ENCODE measurements at regions of chr1 and their contacts with region 1.

Region 1: DNA sequence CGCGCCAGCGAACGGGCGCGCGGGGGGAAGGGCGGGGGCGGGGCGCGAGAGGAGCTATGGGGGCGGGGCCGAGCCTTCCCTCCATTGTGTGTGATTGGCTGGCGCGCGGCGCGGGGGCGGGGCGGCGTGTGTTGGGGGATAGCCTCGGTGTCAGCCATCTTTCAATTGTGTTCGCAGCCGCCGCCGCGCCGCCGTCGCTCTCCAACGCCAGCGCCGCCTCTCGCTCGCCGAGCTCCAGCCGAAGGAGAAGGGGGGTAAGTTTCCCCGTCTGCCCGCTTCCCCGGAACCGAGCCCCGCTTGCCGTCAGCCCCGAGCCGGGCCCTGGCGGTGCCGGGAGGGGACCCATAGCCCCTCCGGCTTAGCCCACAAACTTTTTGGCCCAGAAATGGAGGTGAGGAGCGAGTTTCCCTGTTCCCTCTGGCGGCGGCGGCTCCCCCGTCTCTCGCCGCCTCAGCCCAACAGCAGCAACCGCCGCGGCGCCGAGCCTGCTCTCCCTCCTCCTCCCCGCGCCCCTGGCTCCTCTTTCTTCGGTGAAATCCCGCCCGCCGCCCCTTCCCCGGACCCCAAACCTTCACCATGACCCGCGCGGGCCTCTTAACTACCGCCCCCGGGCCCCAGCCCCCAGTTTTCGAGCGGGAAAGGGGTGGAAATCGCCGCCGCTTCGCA is at the start of gene H3-3A:
- DNase-seq: peak; percentile 98
- H3K4me3 Mint-ChIP-seq: peak within 1 kb of the TSS; percentile 100
- H3K27ac Mint-ChIP-seq: peak within 1 kb of the TSS; percentile 98
- H3K4me1 Mint-ChIP-seq: peaks cover 36% of the 10 kb centered on the region
- H3K27me3 Mint-ChIP-seq: no peaks in the 10 kb centered on the region
- total RNA-seq, gene H3-3A: 325 to 332 TPM

Region 2: GRCh38 chr1:225652729-225653462 is 409.8 kb before region 1 on chr1 and contains the start of gene ENAH:
- CTCF ChIA-PET with region 1: no interaction called
- intact Hi-C with region 1: loop called (anchors 5 kb)
- DNase-seq: peak; percentile 52
- H3K4me3 Mint-ChIP-seq: peak within 1 kb of the TSS; percentile 85
- H3K27ac Mint-ChIP-seq: peak within 1 kb of the TSS; percentile 50
- H3K4me1 Mint-ChIP-seq: peaks cover 10% of the 10 kb centered on the region
- H3K27me3 Mint-ChIP-seq: peaks cover 24% of the 10 kb centered on the region
- total RNA-seq, gene ENAH: 0.91 to 2.0 TPM

Region 3: GRCh38 chr1:225923692-225924555 is 138.8 kb before region 1 on chr1 and contains the start of gene PYCR2:
- CTCF ChIA-PET with region 1: no interaction called
- intact Hi-C with region 1: loop called (anchors 1 kb)
- DNase-seq: peak; percentile 96
- H3K4me3 Mint-ChIP-seq: peak within 1 kb of the TSS; percentile 95
- H3K27ac Mint-ChIP-seq: peak within 1 kb of the TSS; percentile 90
- H3K4me1 Mint-ChIP-seq: peaks cover 59% of the 10 kb centered on the region
- H3K27me3 Mint-ChIP-seq: no peaks in the 10 kb centered on the region
- total RNA-seq, gene PYCR2: 143 to 149 TPM

Region 4: GRCh38 chr1:226083302-226084101 is 20.8 kb after region 1 on chr1:
- CTCF ChIA-PET with region 1: interaction called, 18 read pairs
- intact Hi-C with region 1: loop called (anchors 1 kb)
- DNase-seq: peak; percentile 89
- H3K4me3 Mint-ChIP-seq: peak overlapping the region; percentile 84
- H3K27ac Mint-ChIP-seq: no peak overlapping the region
- H3K4me1 Mint-ChIP-seq: peaks cover 8% of the 10 kb centered on the region
- H3K27me3 Mint-ChIP-seq: no peaks in the 10 kb centered on the region

Region 5: DNA sequence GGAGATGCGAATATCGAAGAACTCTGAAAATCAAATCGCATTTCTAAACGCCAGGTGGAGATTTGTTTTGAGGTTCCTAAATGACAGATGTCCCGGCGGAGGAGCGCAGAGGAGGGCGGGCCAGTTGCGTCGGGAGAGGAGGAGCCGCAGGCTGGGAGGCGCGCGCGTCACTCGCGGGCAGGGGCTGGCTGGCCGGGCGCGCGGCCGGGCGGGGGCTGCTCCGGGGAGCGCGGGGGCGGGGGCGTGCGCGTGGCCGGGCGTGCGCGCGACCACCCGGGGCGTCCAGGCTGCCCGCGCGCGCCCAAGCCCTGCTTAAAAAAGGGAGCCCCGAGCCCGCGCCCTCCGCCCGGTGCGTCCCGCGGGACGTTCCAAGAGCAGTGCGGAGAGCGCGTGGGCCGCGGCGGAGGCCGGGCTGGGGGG is 47.1 kb after region 1 on chr1:
- CTCF ChIA-PET with region 1: interaction called, 32 read pairs
- intact Hi-C with region 1: loop called (anchors 1 kb)
- DNase-seq: peak; percentile 85
- H3K4me3 Mint-ChIP-seq: peak overlapping the region; percentile 76
- H3K27ac Mint-ChIP-seq: peak overlapping the region; percentile 43
- H3K4me1 Mint-ChIP-seq: peaks cover 7% of the 10 kb centered on the region
- H3K27me3 Mint-ChIP-seq: no peaks in the 10 kb centered on the region

Region 6: DNA sequence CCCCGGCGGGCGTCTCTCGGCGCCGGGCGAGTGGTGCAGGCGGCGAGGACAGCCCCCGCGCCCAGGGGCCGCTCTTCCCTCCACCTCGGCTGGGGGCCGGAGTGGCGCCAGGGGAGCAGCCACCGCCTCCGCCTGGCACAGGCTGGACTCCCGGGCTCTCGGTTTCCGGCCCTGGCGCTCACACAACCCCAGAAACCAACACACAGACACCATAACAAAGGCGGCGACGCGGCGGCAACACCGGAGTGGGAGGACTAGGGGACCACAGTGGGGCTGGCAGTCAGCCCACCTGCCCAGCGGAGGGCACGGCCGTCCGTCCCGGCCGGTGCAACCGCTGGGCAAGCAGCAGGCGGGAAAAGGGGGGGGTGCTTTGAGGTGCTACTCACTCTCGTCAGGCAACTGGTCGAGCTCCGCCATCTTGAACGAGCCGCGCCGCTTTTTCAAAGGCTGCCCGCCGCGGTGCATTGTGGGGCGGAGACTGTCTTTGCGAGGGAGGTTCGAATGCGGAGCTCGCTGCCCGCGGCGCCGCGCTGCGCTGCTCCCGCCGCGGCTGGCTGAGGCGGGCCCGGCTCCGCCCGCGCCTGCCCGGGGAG is 246.1 kb after region 1 on chr1 and contains the start of gene LIN9:
- CTCF ChIA-PET with region 1: no interaction called
- intact Hi-C with region 1: loop called (anchors 2 kb)
- DNase-seq: peak; percentile 96
- H3K4me3 Mint-ChIP-seq: peak within 1 kb of the TSS; percentile 91
- H3K27ac Mint-ChIP-seq: peak within 1 kb of the TSS; percentile 82
- H3K4me1 Mint-ChIP-seq: peaks cover 16% of the 10 kb centered on the region
- H3K27me3 Mint-ChIP-seq: peaks cover 16% of the 10 kb centered on the region
- total RNA-seq, gene LIN9: 7.7 to 9.5 TPM

Region 7: DNA sequence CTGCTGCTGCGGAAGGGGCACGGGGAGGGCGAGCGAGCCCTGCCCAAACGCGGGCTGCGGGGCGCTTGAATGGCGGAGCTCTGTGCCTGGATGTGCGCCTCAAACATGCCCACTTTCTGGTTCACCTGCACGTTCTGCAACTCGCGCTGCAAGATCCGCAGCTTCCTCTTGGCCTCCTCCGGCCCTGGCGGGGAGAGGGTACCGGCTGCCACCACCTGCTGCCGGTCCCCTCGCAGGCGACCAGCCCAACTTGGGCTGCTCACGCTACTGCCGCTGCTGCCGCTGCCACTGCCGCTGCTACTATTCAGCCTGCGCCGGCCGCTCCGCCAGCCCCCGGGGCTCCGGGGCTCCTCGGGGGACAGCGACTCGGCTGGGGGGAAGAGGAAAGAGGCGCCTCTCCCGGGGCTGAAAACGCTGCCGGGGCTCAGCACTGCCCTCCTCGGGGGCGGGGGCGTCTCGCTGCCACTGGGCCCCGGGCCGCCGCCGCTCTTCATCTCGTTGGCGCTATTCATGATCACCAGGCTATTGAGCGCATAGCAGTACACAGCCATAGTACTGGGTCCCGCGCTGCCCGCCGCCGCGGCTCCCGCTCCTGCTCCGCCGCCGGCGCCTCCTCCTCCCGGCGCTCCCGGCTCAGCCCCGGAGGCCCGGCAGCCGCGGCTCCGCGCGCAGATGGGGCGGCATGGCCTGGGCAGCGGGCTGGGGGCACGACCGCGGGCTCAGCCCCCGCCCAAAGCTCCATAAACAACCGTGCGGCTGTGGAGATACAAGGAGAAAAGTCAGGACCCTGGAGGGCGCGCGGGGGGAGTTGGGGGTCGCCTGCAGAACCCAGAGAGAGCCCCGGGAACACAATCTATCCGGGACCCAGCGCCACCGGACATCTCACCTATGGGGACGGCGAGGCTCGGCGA is 674.5 kb after region 1 on chr1:
- CTCF ChIA-PET with region 1: no interaction called
- intact Hi-C with region 1: loop called (anchors 5 kb)
- DNase-seq: peak; percentile 68
- H3K4me3 Mint-ChIP-seq: peak overlapping the region; percentile 77
- H3K27ac Mint-ChIP-seq: peak overlapping the region; percentile 98
- H3K4me1 Mint-ChIP-seq: peaks cover 38% of the 10 kb centered on the region
- H3K27me3 Mint-ChIP-seq: no peaks in the 10 kb centered on the region

Measured in activated naive CD4-positive, alpha-beta T cell treated with anti-CD3 and anti-CD28 coated beads for 36 hours (primary cell).